ENCODE measurements at regions of chr9 and their contacts with region 1.

Region 1: GRCh38 chr9:37903647-37904444 is at the start of gene SLC25A51:
- DNase-seq: peak; percentile 98
- ATAC-seq: peak; percentile 82
- H3K4me3 Mint-ChIP-seq: peak within 1 kb of the TSS; percentile 85
- H3K27ac Mint-ChIP-seq: peak within 1 kb of the TSS; percentile 92
- H3K4me1 Mint-ChIP-seq: peaks cover 24% of the 10 kb centered on the region
- H3K27me3 Mint-ChIP-seq: no peaks in the 10 kb centered on the region
- CTCF ChIP-seq: no peak
- total RNA-seq, gene SLC25A51: 30.5 and 33.9 TPM in 2 replicates

Region 2: DNA sequence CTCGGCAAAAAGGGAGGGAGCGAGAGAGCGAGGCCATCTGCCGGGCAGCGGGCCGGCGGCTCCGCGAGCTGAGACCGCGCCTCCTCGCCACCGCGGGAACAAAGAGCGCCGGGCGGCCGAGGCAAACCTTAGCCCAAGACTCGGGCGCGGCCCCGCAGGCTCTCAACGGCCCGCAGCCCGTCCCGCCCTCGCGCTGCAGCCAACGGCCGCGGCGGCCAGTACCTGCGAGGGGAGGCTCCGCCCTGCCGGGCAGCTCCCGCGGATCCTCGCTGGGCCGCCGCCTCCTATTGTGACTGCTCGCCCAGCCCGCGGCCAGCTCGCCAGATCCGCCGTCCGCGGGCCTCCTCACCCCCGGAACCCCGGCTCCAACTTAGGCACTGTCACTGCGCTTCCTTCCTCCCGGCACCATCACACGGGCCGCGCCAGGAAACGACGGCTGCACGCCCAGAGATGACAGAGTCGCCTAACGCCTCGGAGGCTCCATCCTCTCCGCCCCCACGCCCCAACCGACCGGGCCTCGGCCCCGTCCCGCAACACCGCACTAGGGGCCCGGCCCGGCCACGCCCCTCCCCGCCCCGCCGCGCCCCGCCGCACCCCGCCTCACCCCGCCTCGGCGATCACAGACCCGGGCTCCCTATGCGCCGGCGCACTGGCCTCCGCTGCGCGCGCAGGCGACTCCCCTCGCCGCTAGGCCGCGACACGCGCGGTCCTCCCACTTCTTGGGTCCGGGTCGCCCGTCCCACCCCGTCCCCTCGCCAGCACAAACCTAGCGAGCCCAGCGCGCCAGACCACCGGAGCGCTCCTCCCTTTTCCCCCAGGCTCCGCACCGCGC is 1503.3 kb before region 1 on chr9:
- CTCF ChIA-PET with region 1: no interaction called
- POLR2A ChIA-PET with region 1: no interaction called
- intact Hi-C with region 1: loop called (anchors 5 kb)
- DNase-seq: peak; percentile 92
- ATAC-seq: peak; percentile 78
- H3K4me3 Mint-ChIP-seq: peak overlapping the region; percentile 89
- H3K27ac Mint-ChIP-seq: peak overlapping the region; percentile 93
- H3K4me1 Mint-ChIP-seq: peaks cover 38% of the 10 kb centered on the region
- H3K27me3 Mint-ChIP-seq: no peaks in the 10 kb centered on the region
- CTCF ChIP-seq: no peak

Region 3: DNA sequence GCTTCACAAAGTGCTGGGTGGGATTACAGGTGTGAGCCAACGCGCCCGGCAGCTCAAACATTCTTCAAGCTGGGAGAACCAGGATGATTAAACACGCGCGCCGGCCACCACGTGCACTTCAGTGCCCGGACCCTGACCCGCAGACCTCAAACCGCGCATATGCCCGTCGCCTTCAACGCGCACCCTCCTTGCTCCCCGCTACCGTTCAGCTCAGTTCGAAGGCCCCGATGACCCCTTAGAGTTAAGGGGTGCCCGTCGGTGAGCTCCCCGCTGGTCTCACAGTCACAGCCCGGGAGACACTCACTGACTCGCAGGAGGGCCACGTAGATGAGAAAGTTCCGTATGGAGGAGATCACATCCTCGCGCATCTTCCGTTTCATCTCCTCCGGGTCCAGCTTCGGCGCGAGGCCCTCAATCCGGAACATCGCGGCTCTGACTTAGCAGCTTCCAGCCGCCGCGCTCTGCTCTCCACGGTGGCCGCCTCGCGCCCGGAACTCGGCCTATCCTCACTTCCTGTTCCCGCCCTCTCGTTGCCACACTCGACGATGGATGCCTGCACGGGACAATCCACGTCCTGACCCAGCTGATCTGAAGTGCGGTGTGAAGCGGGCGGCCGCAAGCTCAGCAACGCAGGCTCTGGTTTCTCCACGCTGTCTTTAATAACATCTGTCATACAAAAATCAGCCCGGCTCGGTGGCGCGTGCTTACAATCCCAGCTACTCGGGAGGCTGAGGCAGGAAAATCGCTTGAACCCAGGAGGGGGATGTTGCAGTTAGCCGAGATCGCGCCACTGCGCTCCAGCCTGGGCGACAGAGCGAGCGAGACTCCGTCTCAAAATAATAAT is 311.5 kb before region 1 on chr9 and contains the start of gene TOMM5:
- CTCF ChIA-PET with region 1: no interaction called
- POLR2A ChIA-PET with region 1: interaction called, 4 read pairs
- intact Hi-C with region 1: loop called (anchors 2 kb)
- DNase-seq: peak; percentile 82
- ATAC-seq: peak; percentile 94
- H3K4me3 Mint-ChIP-seq: peak within 1 kb of the TSS; percentile 99
- H3K27ac Mint-ChIP-seq: peak within 1 kb of the TSS; percentile 96
- H3K4me1 Mint-ChIP-seq: peaks cover 47% of the 10 kb centered on the region
- H3K27me3 Mint-ChIP-seq: peaks cover 5% of the 10 kb centered on the region
- CTCF ChIP-seq: no peak
- total RNA-seq, gene TOMM5: 77.8 and 80.3 TPM in 2 replicates

Region 4: GRCh38 chr9:37784616-37785483 is 119.0 kb before region 1 on chr9 and contains the start of gene EXOSC3:
- CTCF ChIA-PET with region 1: no interaction called
- POLR2A ChIA-PET with region 1: interaction called, 5 read pairs
- intact Hi-C with region 1: loop called (anchors 1 kb)
- DNase-seq: peak; percentile 83
- ATAC-seq: peak; percentile 87
- H3K4me3 Mint-ChIP-seq: peak within 1 kb of the TSS; percentile 98
- H3K27ac Mint-ChIP-seq: peak within 1 kb of the TSS; percentile 93
- H3K4me1 Mint-ChIP-seq: peaks cover 35% of the 10 kb centered on the region
- H3K27me3 Mint-ChIP-seq: no peaks in the 10 kb centered on the region
- CTCF ChIP-seq: no peak
- total RNA-seq, gene EXOSC3: 63.8 and 69.9 TPM in 2 replicates

Region 5: GRCh38 chr9:37859043-37859442 is 44.8 kb before region 1 on chr9:
- CTCF ChIA-PET with region 1: no interaction called
- POLR2A ChIA-PET with region 1: no interaction called
- intact Hi-C with region 1: no loop called
- DNase-seq: no peak
- ATAC-seq: no peak
- H3K4me3 Mint-ChIP-seq: no peak overlapping the region
- H3K27ac Mint-ChIP-seq: no peak overlapping the region
- H3K4me1 Mint-ChIP-seq: no peaks in the 10 kb centered on the region
- H3K27me3 Mint-ChIP-seq: no peaks in the 10 kb centered on the region
- CTCF ChIP-seq: no peak

Region 6: DNA sequence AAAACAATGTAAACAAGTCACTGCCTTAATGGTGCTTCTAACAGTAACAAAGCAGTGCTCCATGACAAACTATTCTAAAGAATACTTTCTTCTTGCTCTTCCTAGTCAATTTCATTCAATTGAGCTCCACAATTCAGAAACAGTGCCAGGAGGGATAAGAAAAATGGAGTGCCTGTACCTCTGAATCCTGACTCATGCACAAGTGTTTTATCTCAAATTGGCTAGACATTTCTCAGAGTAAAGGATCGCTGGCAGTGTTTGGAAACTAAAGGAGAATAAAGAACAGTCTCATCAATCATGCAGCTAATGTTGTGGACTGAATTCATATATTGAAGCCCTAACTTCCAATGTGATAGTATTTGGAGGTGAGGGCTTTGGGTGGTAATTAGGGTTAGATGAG is 27.5 kb before region 1 on chr9:
- CTCF ChIA-PET with region 1: no interaction called
- POLR2A ChIA-PET with region 1: no interaction called
- intact Hi-C with region 1: no loop called
- DNase-seq: no peak
- ATAC-seq: no peak
- H3K4me3 Mint-ChIP-seq: no peak overlapping the region
- H3K27ac Mint-ChIP-seq: no peak overlapping the region
- H3K4me1 Mint-ChIP-seq: no peaks in the 10 kb centered on the region
- H3K27me3 Mint-ChIP-seq: no peaks in the 10 kb centered on the region
- CTCF ChIP-seq: no peak

Region 7: DNA sequence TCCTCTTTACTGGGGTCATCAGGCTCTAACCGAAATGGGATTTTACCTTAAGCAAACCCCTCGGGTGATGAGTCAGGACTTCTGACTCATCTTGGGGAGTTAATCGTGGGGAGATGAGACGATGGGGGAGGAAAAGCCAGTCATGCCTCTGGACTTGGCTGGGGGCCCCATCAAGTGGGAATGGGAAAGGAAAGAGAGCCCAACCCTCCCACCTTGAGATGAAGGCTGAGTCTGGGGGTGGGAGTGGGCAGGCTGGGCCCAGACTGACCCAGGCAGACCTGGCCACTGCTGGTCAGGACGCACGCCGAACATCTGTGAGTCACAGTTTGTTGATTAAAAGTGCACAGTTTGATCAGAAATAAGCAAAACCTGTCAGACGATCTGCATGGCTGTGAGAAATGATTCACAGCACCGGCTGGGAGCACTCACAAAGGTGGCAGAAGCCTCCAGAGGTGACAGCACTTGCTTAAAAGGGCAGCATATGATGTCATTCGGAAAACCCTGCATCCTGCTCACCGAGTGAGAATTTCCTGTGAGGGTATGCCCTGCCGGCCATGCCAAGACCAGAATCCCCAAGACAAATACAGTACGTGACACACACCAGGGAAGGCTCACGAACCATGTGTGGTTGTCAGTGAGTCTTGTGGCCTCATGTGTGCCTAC is 50.1 kb after region 1 on chr9:
- CTCF ChIA-PET with region 1: no interaction called
- POLR2A ChIA-PET with region 1: no interaction called
- intact Hi-C with region 1: loop called (anchors 1 kb)
- DNase-seq: no peak
- ATAC-seq: peak; percentile 76
- H3K4me3 Mint-ChIP-seq: peak overlapping the region; percentile 22
- H3K27ac Mint-ChIP-seq: peak overlapping the region; percentile 72
- H3K4me1 Mint-ChIP-seq: peaks cover 21% of the 10 kb centered on the region
- H3K27me3 Mint-ChIP-seq: no peaks in the 10 kb centered on the region
- CTCF ChIP-seq: no peak

Region 8: GRCh38 chr9:38117651-38118050 is 213.8 kb after region 1 on chr9:
- CTCF ChIA-PET with region 1: no interaction called
- POLR2A ChIA-PET with region 1: no interaction called
- intact Hi-C with region 1: no loop called
- DNase-seq: no peak
- ATAC-seq: no peak
- H3K4me3 Mint-ChIP-seq: no peak overlapping the region
- H3K27ac Mint-ChIP-seq: no peak overlapping the region
- H3K4me1 Mint-ChIP-seq: no peaks in the 10 kb centered on the region
- H3K27me3 Mint-ChIP-seq: peaks cover 17% of the 10 kb centered on the region
- CTCF ChIP-seq: no peak

Region 9: DNA sequence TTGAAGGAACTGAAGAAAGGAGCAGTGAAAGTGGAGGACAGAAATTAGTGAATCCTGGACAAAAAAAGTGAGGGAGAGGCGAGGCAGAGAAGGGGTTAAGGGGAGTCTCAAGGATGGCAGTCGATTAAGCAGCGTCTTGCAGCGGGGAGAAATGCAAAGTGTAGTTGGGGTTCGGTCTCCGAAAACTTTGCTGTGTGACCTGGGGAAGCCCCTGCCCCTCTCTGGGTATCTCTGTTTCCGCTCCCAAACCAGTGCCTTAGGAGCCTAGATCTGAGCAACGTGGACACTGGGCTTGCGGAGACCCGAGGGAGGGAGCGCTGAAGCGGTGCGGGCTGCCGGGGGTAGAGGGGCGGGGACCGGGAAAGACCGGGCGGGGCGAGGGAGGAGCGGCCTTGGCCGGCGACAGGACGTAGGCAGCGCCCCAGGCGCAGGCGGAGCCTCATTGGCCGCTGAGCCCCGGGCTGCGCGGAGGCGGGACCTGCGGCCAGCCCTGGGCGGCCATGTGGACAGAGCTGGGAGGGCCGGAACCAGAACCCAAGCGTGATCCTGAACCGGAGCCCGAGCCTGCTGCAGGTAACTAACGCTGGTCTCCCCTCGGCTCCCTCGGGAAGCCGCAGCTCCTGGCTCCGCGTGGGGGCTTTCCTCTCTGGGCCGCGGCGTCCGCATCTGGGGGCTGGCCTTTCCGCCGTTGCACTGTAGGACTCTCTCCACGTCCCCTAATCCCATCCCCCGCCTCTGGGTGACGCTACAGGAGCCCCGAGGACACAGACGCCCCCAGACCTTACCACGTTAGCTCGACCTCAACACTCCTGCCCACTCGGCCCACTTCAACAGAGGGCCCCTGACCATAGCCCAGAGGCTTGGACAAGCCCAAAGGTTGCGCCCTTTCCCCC is 488.6 kb after region 1 on chr9 and contains the start of gene ALDH1B1:
- CTCF ChIA-PET with region 1: no interaction called
- POLR2A ChIA-PET with region 1: no interaction called
- intact Hi-C with region 1: loop called (anchors 1 kb)
- DNase-seq: peak; percentile 74
- ATAC-seq: peak; percentile 99
- H3K4me3 Mint-ChIP-seq: peak within 1 kb of the TSS; percentile 94
- H3K27ac Mint-ChIP-seq: peak within 1 kb of the TSS; percentile 79
- H3K4me1 Mint-ChIP-seq: peaks cover 16% of the 10 kb centered on the region
- H3K27me3 Mint-ChIP-seq: peaks cover 6% of the 10 kb centered on the region
- CTCF ChIP-seq: no peak
- total RNA-seq, gene ALDH1B1: 9.0 and 9.8 TPM in 2 replicates

Measured in activated B cell treated with CpG ODN at 0.5 μM for 24 hours (primary cell).